ENCODE measurements at regions of chr19 and their contacts with region 1.

Region 1: DNA sequence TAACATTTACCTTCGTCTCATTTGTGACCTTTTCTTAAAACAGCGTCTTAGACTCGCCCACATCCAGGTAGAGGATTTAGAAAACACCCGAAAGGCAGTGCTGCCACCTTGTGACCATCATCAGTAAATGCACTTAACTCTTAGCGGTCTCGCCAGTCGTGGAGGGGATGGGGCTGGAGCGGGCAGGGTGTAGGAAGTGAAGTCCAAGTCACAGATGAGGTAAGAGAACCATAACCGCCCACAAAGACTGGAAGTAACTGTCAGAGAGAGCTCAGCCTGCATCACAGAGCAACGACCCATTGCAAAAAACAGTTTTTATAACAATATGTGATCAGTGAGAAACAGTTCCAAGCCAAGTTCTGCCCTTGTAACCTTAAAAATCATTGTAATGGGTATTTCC is 10.7 kb upstream of the CEACAM3 start:
- DNase-seq: peak; percentile 91
- H3K4me3 Mint-ChIP-seq: no peak overlapping the region
- H3K27ac Mint-ChIP-seq: no peak overlapping the region
- H3K4me1 Mint-ChIP-seq: peaks cover 17% of the 10 kb centered on the region
- H3K27me3 Mint-ChIP-seq: peaks cover 54% of the 10 kb centered on the region

Region 2: GRCh38 chr19:41753936-41754529 is 31.6 kb before region 1 on chr19:
- intact Hi-C with region 1: loop called (anchors 1 kb)
- DNase-seq: peak; percentile 90
- H3K4me3 Mint-ChIP-seq: no peak overlapping the region
- H3K27ac Mint-ChIP-seq: no peak overlapping the region
- H3K4me1 Mint-ChIP-seq: peaks cover 6% of the 10 kb centered on the region
- H3K27me3 Mint-ChIP-seq: peaks cover 50% of the 10 kb centered on the region

Region 3: GRCh38 chr19:41775360-41775695 is 10.3 kb before region 1 on chr19:
- intact Hi-C with region 1: loop called (anchors 1 kb)
- DNase-seq: no peak
- H3K4me3 Mint-ChIP-seq: no peak overlapping the region
- H3K27ac Mint-ChIP-seq: no peak overlapping the region
- H3K4me1 Mint-ChIP-seq: peaks cover 23% of the 10 kb centered on the region
- H3K27me3 Mint-ChIP-seq: peaks cover 81% of the 10 kb centered on the region

Measured in activated CD4-positive, alpha-beta T cell treated with anti-CD3 and anti-CD28 coated beads, Interleukin-2, amount 10 ng/mL, durations not matched to agents 24 days and 14 days (primary cell).